GM12878 (cell line): ENCODE measurements at regions of chrX and their contacts with region 1.

Region 1: GRCh38 chrX:42759881-42760280 is 18.1 kb downstream of the PPP1R2C start:
- DNase-seq: no peak
- ATAC-seq: no peak
- H3K4me3 ChIP-seq: no peak overlapping the region
- H3K27ac ChIP-seq: no peak overlapping the region
- H3K4me1 ChIP-seq: no peaks in the 10 kb centered on the region
- H3K27me3 ChIP-seq: no peaks in the 10 kb centered on the region
- CTCF ChIP-seq: no peak
- EP300 ChIP-seq: no peak
- POLR2A ChIP-seq: no peak
- RAD21 ChIP-seq: no peak

Region 2: DNA sequence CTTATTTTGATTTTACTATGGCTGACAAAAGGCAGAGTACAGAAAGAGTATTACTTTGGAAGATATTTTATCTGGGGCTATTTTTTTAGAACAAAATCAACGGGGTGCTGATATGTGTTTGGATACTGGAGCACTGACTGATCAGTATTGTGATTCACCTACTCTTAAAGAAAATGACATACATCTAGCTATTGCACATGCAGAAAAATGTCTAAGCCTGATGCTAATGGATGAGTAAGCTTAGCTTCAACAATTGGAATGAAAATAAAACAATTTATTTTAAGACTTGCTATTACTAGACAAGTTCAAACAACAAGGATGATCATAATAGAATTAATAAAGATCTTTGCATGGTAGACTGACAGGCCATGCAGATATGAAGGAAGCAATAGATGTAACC is 243.9 kb before region 1 on chrX:
- CTCF ChIA-PET with region 1: no interaction called
- POLR2A ChIA-PET with region 1: no interaction called
- RAD21 ChIA-PET with region 1: no interaction called
- SMC1A ChIA-PET with region 1: no interaction called
- in situ Hi-C with region 1: no loop called
- intact Hi-C with region 1: no loop called
- DNase-seq: no peak
- ATAC-seq: no peak
- H3K4me3 ChIP-seq: no peak overlapping the region
- H3K27ac ChIP-seq: no peak overlapping the region
- H3K4me1 ChIP-seq: no peaks in the 10 kb centered on the region
- H3K27me3 ChIP-seq: no peaks in the 10 kb centered on the region
- CTCF ChIP-seq: no peak
- EP300 ChIP-seq: no peak
- POLR2A ChIP-seq: no peak
- RAD21 ChIP-seq: no peak

Region 3: DNA sequence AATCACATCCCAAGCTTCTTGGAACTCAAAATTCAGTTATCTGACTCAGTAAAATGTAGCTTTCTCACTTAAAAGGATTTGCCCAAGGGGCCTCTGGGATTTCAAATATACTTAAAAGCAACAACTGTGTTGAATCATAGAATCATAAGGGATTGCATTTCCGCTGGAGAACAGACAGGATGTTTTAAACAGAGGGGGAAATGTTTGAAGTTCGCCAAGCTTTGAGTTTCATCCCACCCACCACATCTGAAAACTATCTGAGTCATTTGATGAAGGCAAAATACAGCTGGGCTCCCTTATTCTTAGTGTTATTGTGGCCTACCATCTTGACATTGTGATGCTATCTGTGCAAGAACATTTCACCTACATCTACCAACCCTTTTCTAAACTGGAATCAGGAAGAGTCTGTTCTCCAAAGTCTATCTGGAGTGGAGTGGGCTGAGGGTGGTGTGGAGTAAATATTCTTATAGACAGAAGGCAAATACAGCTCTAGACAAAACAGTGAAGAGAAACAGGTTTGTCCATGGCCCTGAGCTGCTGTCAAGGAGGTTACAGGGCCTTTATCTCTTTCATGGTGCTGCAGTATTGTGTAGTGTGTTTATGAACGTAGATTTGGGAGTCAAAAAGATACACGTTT is 55.3 kb before region 1 on chrX:
- CTCF ChIA-PET with region 1: no interaction called
- POLR2A ChIA-PET with region 1: no interaction called
- RAD21 ChIA-PET with region 1: no interaction called
- SMC1A ChIA-PET with region 1: no interaction called
- in situ Hi-C with region 1: loop called (anchors 10 kb)
- intact Hi-C with region 1: no loop called
- DNase-seq: no peak
- ATAC-seq: no peak
- H3K4me3 ChIP-seq: no peak overlapping the region
- H3K27ac ChIP-seq: no peak overlapping the region
- H3K4me1 ChIP-seq: no peaks in the 10 kb centered on the region
- H3K27me3 ChIP-seq: no peaks in the 10 kb centered on the region
- CTCF ChIP-seq: no peak
- EP300 ChIP-seq: no peak
- POLR2A ChIP-seq: no peak
- RAD21 ChIP-seq: no peak